Caco-2 (cell line): ENCODE measurements at regions of chr18 and their contacts with region 1.

Region 1: GRCh38 chr18:12308386-12309100 is 502 bp downstream of the TUBB6 start:
- DNase-seq: peak; percentile 72 to 85
- H3K4me3 ChIP-seq: peak overlapping the region; percentile 48
- H3K4me3 Mint-ChIP-seq: peak overlapping the region; percentile 80
- H3K27ac Mint-ChIP-seq: peak overlapping the region; percentile 81
- H3K4me1 ChIP-seq: peaks cover 20% of the 10 kb centered on the region
- H3K4me1 Mint-ChIP-seq: peaks cover 12% of the 10 kb centered on the region
- H3K27me3 ChIP-seq: no peaks in the 10 kb centered on the region
- H3K27me3 Mint-ChIP-seq: no peaks in the 10 kb centered on the region
- CTCF ChIP-seq: no peak

Region 2: DNA sequence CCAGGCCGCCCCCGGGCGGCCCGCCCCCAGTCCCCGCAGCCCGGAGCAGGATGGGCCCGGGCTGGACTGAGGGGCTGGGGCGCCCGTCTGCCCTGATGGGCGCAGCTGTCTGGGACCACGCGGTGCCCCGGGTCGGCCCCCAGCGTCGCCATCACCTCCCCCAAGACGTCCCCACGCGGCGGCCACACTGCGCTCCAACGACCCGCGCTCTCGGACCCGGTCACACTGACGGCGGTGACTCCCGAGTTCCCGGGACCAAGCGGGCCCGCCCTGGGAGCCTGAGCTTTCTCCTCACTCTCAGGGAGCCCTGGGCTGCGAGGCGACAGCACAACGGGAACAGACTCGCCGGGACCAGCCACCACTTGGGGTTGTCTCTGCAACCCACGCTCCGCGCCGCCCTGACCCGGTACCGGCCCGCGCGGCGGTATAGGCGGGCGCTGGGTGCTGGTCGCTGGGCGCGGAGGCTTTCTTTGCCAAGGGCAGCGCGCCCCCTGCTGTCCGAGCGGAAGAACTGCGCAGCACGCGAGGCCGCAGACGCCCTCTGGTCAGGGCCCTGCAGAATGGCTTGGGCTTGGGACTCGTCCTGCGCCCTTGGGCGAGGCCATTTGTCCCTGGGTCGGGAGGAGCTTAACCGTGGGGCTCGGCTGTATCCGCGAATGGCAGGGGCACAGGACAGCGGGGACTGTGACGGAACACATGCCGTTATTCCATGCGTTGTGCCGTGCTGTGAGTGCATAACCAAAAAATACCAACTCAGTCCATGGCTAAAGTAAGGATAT is 269.7 kb before region 1 on chr18:
- CTCF ChIA-PET with region 1: no interaction called
- POLR2A ChIA-PET with region 1: no interaction called
- intact Hi-C with region 1: no loop called
- DNase-seq: peak; percentile 83 to 90
- H3K4me3 ChIP-seq: peak overlapping the region; percentile 52
- H3K4me3 Mint-ChIP-seq: peak overlapping the region; percentile 80
- H3K27ac Mint-ChIP-seq: no peak overlapping the region
- H3K4me1 ChIP-seq: peaks cover 3% of the 10 kb centered on the region; the same call in 1 of the 2 replicates
- H3K4me1 Mint-ChIP-seq: no peaks in the 10 kb centered on the region
- H3K27me3 ChIP-seq: no peaks in the 10 kb centered on the region
- H3K27me3 Mint-ChIP-seq: peaks cover 2% of the 10 kb centered on the region
- CTCF ChIP-seq: peak; percentile 96 to 97

Region 3: GRCh38 chr18:12278741-12279682 is 29.5 kb before region 1 on chr18:
- CTCF ChIA-PET with region 1: interaction called, 4 read pairs
- POLR2A ChIA-PET with region 1: interaction called, 8 read pairs
- intact Hi-C with region 1: loop called (anchors 2 kb)
- DNase-seq: peak; percentile 86 to 90
- H3K4me3 ChIP-seq: peak overlapping the region; percentile 15
- H3K4me3 Mint-ChIP-seq: peak overlapping the region; percentile 60
- H3K27ac Mint-ChIP-seq: peak overlapping the region; percentile 95
- H3K4me1 ChIP-seq: peaks cover 32% of the 10 kb centered on the region
- H3K4me1 Mint-ChIP-seq: peaks cover 10% of the 10 kb centered on the region
- H3K27me3 ChIP-seq: no peaks in the 10 kb centered on the region
- H3K27me3 Mint-ChIP-seq: no peaks in the 10 kb centered on the region
- CTCF ChIP-seq: peak in 1 of 2 experiments; percentile 28

Region 4: GRCh38 chr18:12327510-12328178 is 19.1 kb after region 1 on chr18:
- CTCF ChIA-PET with region 1: interaction called, 10 read pairs
- POLR2A ChIA-PET with region 1: no interaction called
- intact Hi-C with region 1: no loop called
- DNase-seq: peak; percentile 77 to 86
- H3K4me3 ChIP-seq: no peak overlapping the region
- H3K4me3 Mint-ChIP-seq: no peak overlapping the region
- H3K27ac Mint-ChIP-seq: peak overlapping the region; percentile 22
- H3K4me1 ChIP-seq: no peaks in the 10 kb centered on the region
- H3K4me1 Mint-ChIP-seq: no peaks in the 10 kb centered on the region
- H3K27me3 ChIP-seq: no peaks in the 10 kb centered on the region
- H3K27me3 Mint-ChIP-seq: no peaks in the 10 kb centered on the region
- CTCF ChIP-seq: peak; percentile 80 to 82

Region 5: DNA sequence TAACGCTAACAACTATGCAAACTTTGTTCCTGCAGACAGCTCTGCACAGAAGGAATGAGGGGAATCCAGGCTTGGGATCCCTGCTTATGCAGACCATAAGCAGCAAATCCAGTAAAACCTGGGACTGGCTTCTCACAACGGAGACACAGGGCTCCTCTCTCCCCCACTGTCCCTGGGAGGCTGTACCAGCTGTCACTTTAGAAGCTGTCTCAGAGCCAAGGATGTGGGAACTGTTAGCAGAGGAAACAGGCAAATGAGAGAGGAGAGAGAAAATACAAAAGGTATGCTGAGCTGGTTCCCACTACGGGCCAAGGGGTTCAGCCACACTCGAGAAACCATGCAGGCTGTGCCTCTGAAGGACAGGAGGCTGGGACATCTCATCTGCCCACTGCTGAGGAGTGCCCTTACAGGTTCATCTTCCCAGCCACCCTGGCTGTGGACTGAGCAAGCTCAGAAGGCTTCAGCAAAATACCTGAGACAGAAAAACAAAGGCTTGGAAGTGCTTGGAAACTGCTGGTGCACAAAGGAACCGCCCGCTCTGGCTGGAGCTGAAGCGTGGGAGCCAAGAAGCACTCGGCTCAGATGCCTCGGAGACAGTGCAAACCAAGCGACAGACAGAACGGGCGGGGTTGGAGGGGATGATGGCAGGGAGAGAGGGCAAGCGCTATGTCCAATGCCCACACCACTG is 1345.3 kb after region 1 on chr18:
- CTCF ChIA-PET with region 1: no interaction called
- POLR2A ChIA-PET with region 1: no interaction called
- intact Hi-C with region 1: no loop called
- DNase-seq: no peak
- H3K4me3 ChIP-seq: no peak overlapping the region
- H3K4me3 Mint-ChIP-seq: no peak overlapping the region
- H3K27ac Mint-ChIP-seq: no peak overlapping the region
- H3K4me1 ChIP-seq: no peaks in the 10 kb centered on the region
- H3K4me1 Mint-ChIP-seq: no peaks in the 10 kb centered on the region
- H3K27me3 ChIP-seq: no peaks in the 10 kb centered on the region
- H3K27me3 Mint-ChIP-seq: no peaks in the 10 kb centered on the region
- CTCF ChIP-seq: no peak